CD8-positive, alpha-beta T cell (primary cell): ENCODE measurements at regions of chr9 and their contacts with region 1.

Region 1: GRCh38 chr9:34611829-34612630 is at the start of gene RPP25L:
- DNase-seq: peak; percentile 65 to 92 (median 85)
- ATAC-seq: peak; percentile 95
- H3K4me3 ChIP-seq: peak within 1 kb of the TSS; percentile 88 to 93
- H3K4me3 Mint-ChIP-seq: peak within 1 kb of the TSS; percentile 85
- H3K27ac ChIP-seq: peak within 1 kb of the TSS; percentile 77 to 91
- H3K27ac Mint-ChIP-seq: peak within 1 kb of the TSS; percentile 91
- H3K4me1 ChIP-seq: peaks cover 17% of the 10 kb centered on the region
- H3K4me1 Mint-ChIP-seq: peaks cover 23% of the 10 kb centered on the region
- H3K27me3 ChIP-seq: no peaks in the 10 kb centered on the region
- H3K27me3 Mint-ChIP-seq: no peaks in the 10 kb centered on the region
- CTCF ChIP-seq: no peak
- total RNA-seq, gene RPP25L: 4.4 to 5.1 TPM

Region 2: GRCh38 chr9:34458013-34458958 is 153.7 kb before region 1 on chr9 and contains the starts of genes DNAI1 and FAM219A:
- CTCF ChIA-PET with region 1: no interaction called
- POLR2A ChIA-PET with region 1: no interaction called
- intact Hi-C with region 1: loop called (anchors 1 to 5 kb)
- DNase-seq: peak; percentile 98 to 99 (median 99)
- ATAC-seq: peak; percentile 96
- H3K4me3 ChIP-seq: peak within 1 kb of the TSS; percentile 61 to 67
- H3K4me3 Mint-ChIP-seq: peak within 1 kb of the TSS; percentile 91
- H3K27ac ChIP-seq: peak within 1 kb of the TSS in 1 of 2 experiments; percentile 29
- H3K27ac Mint-ChIP-seq: peak within 1 kb of the TSS; percentile 46
- H3K4me1 ChIP-seq: peaks cover 14% of the 10 kb centered on the region
- H3K4me1 Mint-ChIP-seq: peaks cover 30% of the 10 kb centered on the region
- H3K27me3 ChIP-seq: no peaks in the 10 kb centered on the region
- H3K27me3 Mint-ChIP-seq: no peaks in the 10 kb centered on the region
- CTCF ChIP-seq: no peak
- total RNA-seq, gene DNAI1: not detected
- total RNA-seq, gene FAM219A: 5.5 to 5.9 TPM

Region 3: GRCh38 chr9:34646211-34647083 is 34.4 kb after region 1 on chr9 and contains the start of gene GALT:
- CTCF ChIA-PET with region 1: interaction called, 6 read pairs
- POLR2A ChIA-PET with region 1: no interaction called
- intact Hi-C with region 1: loop called in 1 of 2 experiments (anchors 1 kb)
- DNase-seq: peak; percentile 90 to 98 (median 97)
- ATAC-seq: peak; percentile 90
- H3K4me3 ChIP-seq: peak within 1 kb of the TSS; percentile 89 to 99
- H3K4me3 Mint-ChIP-seq: peak within 1 kb of the TSS; percentile 95
- H3K27ac ChIP-seq: peak within 1 kb of the TSS; percentile 69 to 80
- H3K27ac Mint-ChIP-seq: peak within 1 kb of the TSS; percentile 89
- H3K4me1 ChIP-seq: peaks cover 27% of the 10 kb centered on the region
- H3K4me1 Mint-ChIP-seq: peaks cover 31% of the 10 kb centered on the region
- H3K27me3 ChIP-seq: no peaks in the 10 kb centered on the region
- H3K27me3 Mint-ChIP-seq: no peaks in the 10 kb centered on the region
- CTCF ChIP-seq: peak; percentile 58
- total RNA-seq, gene GALT: 64.7 to 68.4 TPM

Region 4: GRCh38 chr9:35071814-35072460 is 459.9 kb after region 1 on chr9:
- CTCF ChIA-PET with region 1: no interaction called
- POLR2A ChIA-PET with region 1: no interaction called
- intact Hi-C with region 1: no loop called
- DNase-seq: peak; percentile 40 to 87 (median 73)
- ATAC-seq: peak; percentile 49
- H3K4me3 ChIP-seq: peak overlapping the region; percentile 82 to 93
- H3K4me3 Mint-ChIP-seq: peak overlapping the region; percentile 93
- H3K27ac ChIP-seq: peak overlapping the region; percentile 91 to 94
- H3K27ac Mint-ChIP-seq: peak overlapping the region; percentile 97
- H3K4me1 ChIP-seq: peaks cover 49% of the 10 kb centered on the region
- H3K4me1 Mint-ChIP-seq: peaks cover 49% of the 10 kb centered on the region
- H3K27me3 ChIP-seq: no peaks in the 10 kb centered on the region
- H3K27me3 Mint-ChIP-seq: no peaks in the 10 kb centered on the region
- CTCF ChIP-seq: peak; percentile 43

Region 5: GRCh38 chr9:35481347-35481975 is 869.4 kb after region 1 on chr9:
- CTCF ChIA-PET with region 1: no interaction called
- POLR2A ChIA-PET with region 1: no interaction called
- intact Hi-C with region 1: loop called in 1 of 2 experiments (anchors 5 kb)
- DNase-seq: peak in 2 of 9 experiments; percentile 13 to 26
- ATAC-seq: peak; percentile 40
- H3K4me3 ChIP-seq: no peak overlapping the region
- H3K4me3 Mint-ChIP-seq: no peak overlapping the region
- H3K27ac ChIP-seq: no peak overlapping the region
- H3K27ac Mint-ChIP-seq: no peak overlapping the region
- H3K4me1 ChIP-seq: no peaks in the 10 kb centered on the region
- H3K4me1 Mint-ChIP-seq: no peaks in the 10 kb centered on the region
- H3K27me3 ChIP-seq: peaks cover 2 to 6% of the 10 kb centered on the region in 2 experiments
- H3K27me3 Mint-ChIP-seq: peaks cover 5% of the 10 kb centered on the region
- CTCF ChIP-seq: peak; percentile 22